Aorta (tissue), 5 donors: ENCODE measurements at regions of chr6 and their contacts with region 1.

Region 1: DNA sequence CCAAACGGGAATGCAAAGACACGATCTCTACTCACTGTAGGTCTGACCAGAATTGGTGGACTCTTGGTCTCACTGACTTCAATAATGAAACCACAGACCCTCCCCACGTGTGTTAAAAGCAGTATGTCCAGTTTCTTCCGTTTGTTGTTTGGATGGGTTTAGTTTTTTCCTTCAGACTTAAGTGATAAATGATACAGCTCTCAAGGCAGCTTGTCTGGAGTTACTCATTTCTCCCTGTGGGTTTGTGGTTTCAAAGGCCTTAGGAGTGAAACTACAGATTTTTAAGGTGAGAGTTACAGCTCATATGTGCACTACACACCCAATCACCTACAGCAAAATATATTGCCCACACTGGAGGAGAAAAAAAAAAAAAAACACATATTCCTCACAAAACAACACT is 86.7 kb upstream of the STMND1 start:
- DNase-seq: no peak
- ATAC-seq: no peak
- H3K4me3 ChIP-seq: no peak overlapping the region
- H3K27ac ChIP-seq: no peak overlapping the region
- H3K4me1 ChIP-seq: no peaks in the 10 kb centered on the region
- H3K27me3 ChIP-seq: no peaks in the 10 kb centered on the region

Region 2: DNA sequence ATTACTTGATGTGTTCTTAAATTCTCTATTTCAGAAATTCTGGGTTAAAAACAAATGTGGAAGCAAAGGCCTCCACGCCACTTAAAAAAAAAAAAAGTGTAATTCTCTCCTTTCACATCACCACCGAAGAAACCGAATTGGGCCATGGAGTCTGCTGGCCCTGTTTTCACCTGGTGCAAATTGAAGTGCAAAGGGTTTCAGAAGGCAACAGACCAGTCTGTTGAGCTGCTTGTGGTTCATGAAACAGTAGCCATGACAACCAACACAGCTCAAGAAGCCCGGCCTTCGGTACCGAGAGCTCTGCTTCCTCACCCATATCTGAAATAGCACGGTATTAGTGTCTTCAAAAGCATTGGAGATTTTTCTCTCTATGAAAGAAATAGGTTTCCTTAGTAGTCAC is 713.6 kb before region 1 on chr6:
- intact Hi-C with region 1: no loop called
- DNase-seq: no peak
- ATAC-seq: no peak
- H3K4me3 ChIP-seq: no peak overlapping the region
- H3K27ac ChIP-seq: no peak overlapping the region
- H3K4me1 ChIP-seq: no peaks in the 10 kb centered on the region
- H3K27me3 ChIP-seq: no peaks in the 10 kb centered on the region

Region 3: DNA sequence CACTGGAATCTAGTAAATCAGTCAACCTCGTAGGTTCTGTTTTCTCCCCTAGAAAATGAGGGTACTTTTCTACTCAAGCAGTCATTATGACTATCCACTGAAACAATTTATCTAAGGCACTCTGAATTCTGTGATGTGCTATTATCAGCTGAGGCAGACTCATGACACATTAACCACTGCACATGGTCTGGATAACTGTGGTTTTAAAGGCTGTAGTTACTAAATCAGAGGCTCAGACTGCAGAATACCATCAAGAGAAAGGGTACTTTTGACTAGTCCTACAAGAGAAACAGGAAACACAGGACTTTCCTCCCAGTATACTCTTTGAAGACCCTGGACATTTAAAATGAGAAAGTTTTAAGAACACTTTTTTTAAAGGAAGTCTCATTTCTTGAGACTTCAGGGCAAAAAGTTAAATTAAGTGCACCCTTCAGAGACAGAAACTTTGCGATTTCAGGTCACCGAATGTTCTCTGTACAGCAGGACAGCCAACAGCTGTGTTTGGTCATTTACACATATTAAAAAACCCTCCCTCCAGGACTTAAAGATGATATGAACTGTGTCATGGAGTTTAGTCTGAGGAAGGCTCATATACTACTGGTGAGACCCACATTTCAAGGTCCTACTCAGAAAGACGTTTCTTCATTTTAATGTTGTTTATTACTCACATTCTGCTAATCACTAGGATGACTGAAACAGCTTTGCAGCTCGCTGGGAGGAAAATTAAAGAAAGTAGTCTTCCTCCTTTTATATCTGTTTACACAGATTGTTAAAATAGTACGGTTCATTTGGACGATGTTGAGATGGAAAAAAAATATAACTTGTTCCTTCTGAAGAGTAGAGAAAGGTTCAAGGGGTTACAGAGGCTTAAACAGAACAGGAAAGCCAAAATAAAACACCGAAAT is 273.8 kb before region 1 on chr6:
- intact Hi-C with region 1: no loop called
- DNase-seq: no peak
- ATAC-seq: no peak
- H3K4me3 ChIP-seq: no peak overlapping the region
- H3K27ac ChIP-seq: peak overlapping the region; percentile 25 to 49
- H3K4me1 ChIP-seq: peaks cover 3 to 4% of the 10 kb centered on the region in 2 donors
- H3K27me3 ChIP-seq: no peaks in the 10 kb centered on the region

Region 4: GRCh38 chr6:17086469-17086868 is 71.3 kb after region 1 on chr6:
- intact Hi-C with region 1: loop called in 1 of 2 experiments (anchors 10 kb)
- DNase-seq: no peak
- ATAC-seq: peak; percentile 69
- H3K4me3 ChIP-seq: no peak overlapping the region
- H3K27ac ChIP-seq: no peak overlapping the region
- H3K4me1 ChIP-seq: no peaks in the 10 kb centered on the region
- H3K27me3 ChIP-seq: no peaks in the 10 kb centered on the region

Region 5: DNA sequence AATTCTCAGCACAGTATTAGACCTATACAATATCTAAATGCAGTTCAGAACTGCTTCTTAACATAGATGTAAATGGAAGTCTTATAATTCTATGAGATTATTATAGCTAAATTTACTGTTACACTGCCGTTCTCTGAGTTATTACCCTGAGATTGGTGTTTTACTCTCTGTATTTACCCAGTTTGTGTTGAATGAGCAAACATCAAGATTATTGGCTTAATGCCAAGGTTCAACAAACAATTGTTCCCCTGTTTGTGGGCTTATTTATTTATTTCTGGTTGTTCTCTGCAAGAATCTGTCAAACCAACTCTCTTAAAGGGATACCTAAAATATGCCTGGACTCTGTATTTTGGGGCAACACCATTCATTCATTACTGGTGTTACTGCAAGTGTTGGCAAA is 81.5 kb after region 1 on chr6:
- intact Hi-C with region 1: no loop called
- DNase-seq: no peak
- ATAC-seq: no peak
- H3K4me3 ChIP-seq: no peak overlapping the region
- H3K27ac ChIP-seq: no peak overlapping the region
- H3K4me1 ChIP-seq: no peaks in the 10 kb centered on the region
- H3K27me3 ChIP-seq: no peaks in the 10 kb centered on the region